ENCODE measurements at regions of chr6 and their contacts with region 1.

Region 1: GRCh38 chr6:30914076-30914853 is at the start of gene VARS2:
- DNase-seq: peak; percentile 66 to 92 (median 82)
- ATAC-seq: peak; percentile 96
- H3K4me3 ChIP-seq: peak within 1 kb of the TSS; percentile 61 to 92
- H3K4me3 Mint-ChIP-seq: peak within 1 kb of the TSS; percentile 93
- H3K27ac ChIP-seq: peak within 1 kb of the TSS; percentile 48 to 65
- H3K27ac Mint-ChIP-seq: peak within 1 kb of the TSS; percentile 88
- H3K4me1 ChIP-seq: peaks cover 15% of the 10 kb centered on the region
- H3K4me1 Mint-ChIP-seq: peaks cover 29% of the 10 kb centered on the region
- H3K27me3 ChIP-seq: no peaks in the 10 kb centered on the region
- H3K27me3 Mint-ChIP-seq: no peaks in the 10 kb centered on the region
- CTCF ChIP-seq: no peak
- total RNA-seq, gene VARS2: 19.5 to 20.6 TPM

Region 2: DNA sequence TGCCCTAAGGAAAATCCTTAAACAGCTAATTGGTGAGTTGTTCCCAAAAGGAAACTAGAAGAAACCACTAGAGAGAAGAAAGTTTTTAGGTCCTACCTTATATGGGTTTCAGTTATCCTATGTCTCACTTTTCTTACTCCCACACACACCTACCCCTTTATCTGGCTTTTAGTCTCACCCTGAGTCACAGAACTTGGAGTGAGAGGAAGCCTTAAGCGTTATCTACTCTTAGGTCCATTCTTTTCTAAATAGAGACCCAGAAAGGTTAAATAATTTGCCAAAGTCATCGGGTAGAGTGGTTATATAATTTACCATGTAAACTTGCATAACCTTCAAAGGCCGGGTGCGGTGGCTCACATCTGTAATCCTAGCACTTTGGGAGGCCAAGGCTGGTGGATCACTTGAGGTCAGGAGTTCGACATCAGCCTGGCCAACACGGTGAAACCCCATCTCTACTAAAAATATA is 573.6 kb before region 1 on chr6:
- CTCF ChIA-PET with region 1: no interaction called
- POLR2A ChIA-PET with region 1: no interaction called
- intact Hi-C with region 1: no loop called
- DNase-seq: no peak
- ATAC-seq: no peak
- H3K4me3 ChIP-seq: no peak overlapping the region
- H3K4me3 Mint-ChIP-seq: no peak overlapping the region
- H3K27ac ChIP-seq: no peak overlapping the region
- H3K27ac Mint-ChIP-seq: no peak overlapping the region
- H3K4me1 ChIP-seq: peaks cover 4% of the 10 kb centered on the region
- H3K4me1 Mint-ChIP-seq: peaks cover 9% of the 10 kb centered on the region
- H3K27me3 ChIP-seq: no peaks in the 10 kb centered on the region
- H3K27me3 Mint-ChIP-seq: no peaks in the 10 kb centered on the region
- CTCF ChIP-seq: no peak

Region 3: DNA sequence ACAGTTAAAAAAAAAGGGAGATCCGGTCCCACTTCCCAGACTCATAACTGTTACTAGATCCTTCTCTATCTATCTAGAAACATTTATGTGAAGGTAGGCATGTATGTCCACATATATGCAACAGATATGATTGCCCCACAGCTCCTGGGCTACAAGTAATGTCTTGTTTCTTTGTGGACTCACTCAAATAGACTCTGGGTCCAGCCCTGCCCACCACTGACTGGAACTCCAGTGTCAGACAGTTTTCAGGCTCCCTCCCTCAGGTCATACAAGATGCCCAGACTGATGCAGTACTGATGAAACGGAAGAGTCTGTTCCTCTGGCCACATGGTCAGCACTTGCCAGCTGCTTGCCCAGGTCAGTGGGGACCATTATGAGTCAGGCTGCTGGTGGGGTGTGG is 139.2 kb before region 1 on chr6:
- CTCF ChIA-PET with region 1: no interaction called
- POLR2A ChIA-PET with region 1: no interaction called
- intact Hi-C with region 1: no loop called
- DNase-seq: no peak
- ATAC-seq: no peak
- H3K4me3 ChIP-seq: no peak overlapping the region
- H3K4me3 Mint-ChIP-seq: no peak overlapping the region
- H3K27ac ChIP-seq: no peak overlapping the region
- H3K27ac Mint-ChIP-seq: no peak overlapping the region
- H3K4me1 ChIP-seq: peaks cover 7% of the 10 kb centered on the region
- H3K4me1 Mint-ChIP-seq: peaks cover 32% of the 10 kb centered on the region
- H3K27me3 ChIP-seq: no peaks in the 10 kb centered on the region
- H3K27me3 Mint-ChIP-seq: no peaks in the 10 kb centered on the region
- CTCF ChIP-seq: no peak

Region 4: GRCh38 chr6:31068669-31069340 is 154.5 kb after region 1 on chr6:
- CTCF ChIA-PET with region 1: interaction called, 4 read pairs
- POLR2A ChIA-PET with region 1: interaction called, 3 read pairs
- intact Hi-C with region 1: loop called in 1 of 2 experiments (anchors 1 kb)
- DNase-seq: peak; percentile 37 to 82 (median 67)
- ATAC-seq: peak; percentile 75
- H3K4me3 ChIP-seq: no peak overlapping the region
- H3K4me3 Mint-ChIP-seq: no peak overlapping the region
- H3K27ac ChIP-seq: no peak overlapping the region
- H3K27ac Mint-ChIP-seq: no peak overlapping the region
- H3K4me1 ChIP-seq: no peaks in the 10 kb centered on the region
- H3K4me1 Mint-ChIP-seq: no peaks in the 10 kb centered on the region
- H3K27me3 ChIP-seq: no peaks in the 10 kb centered on the region
- H3K27me3 Mint-ChIP-seq: peaks cover 2% of the 10 kb centered on the region
- CTCF ChIP-seq: peak; percentile 76